ENCODE measurements at regions of chr11 and their contacts with region 1.

Region 1: GRCh38 chr11:6992457-6993417 is 27.4 kb downstream of the ZNF214 start:
- DNase-seq: no peak
- H3K4me3 Mint-ChIP-seq: no peak overlapping the region
- H3K27ac Mint-ChIP-seq: no peak overlapping the region
- H3K4me1 Mint-ChIP-seq: no peaks in the 10 kb centered on the region
- H3K27me3 Mint-ChIP-seq: no peaks in the 10 kb centered on the region

Region 2: DNA sequence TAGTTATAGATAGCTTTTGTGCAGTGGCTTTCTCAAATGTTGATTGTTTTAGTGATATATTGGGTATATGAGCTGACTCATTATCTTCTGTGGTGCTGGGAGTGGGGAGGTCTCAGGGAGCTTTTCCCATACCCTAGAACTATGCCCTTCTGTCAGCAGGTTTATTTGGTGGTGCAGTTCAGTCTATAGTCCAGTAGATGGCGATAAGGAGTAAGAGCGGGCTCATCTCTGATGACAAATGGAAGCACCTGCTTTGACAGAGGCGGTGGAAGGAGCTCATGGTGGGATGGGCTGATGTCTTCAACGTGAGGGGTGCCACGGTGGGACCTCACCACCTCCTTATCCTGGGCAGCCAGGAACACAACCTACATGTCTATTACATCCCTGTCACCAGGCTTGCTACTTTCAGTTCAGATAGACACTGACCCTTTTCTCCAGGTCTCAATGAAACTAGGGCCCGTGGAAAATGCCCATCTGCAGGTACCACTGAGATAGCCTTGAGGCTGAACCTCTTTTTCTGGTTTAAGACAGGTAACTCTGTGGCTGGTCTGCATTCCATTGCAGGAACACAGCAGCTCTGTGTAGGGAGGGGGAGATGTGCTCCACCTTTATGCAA is 180.2 kb before region 1 on chr11:
- intact Hi-C with region 1: loop called (anchors 10 kb)
- DNase-seq: peak; percentile 23
- H3K4me3 Mint-ChIP-seq: no peak overlapping the region
- H3K27ac Mint-ChIP-seq: no peak overlapping the region
- H3K4me1 Mint-ChIP-seq: peaks cover 1% of the 10 kb centered on the region
- H3K27me3 Mint-ChIP-seq: peaks cover 28% of the 10 kb centered on the region

Region 3: GRCh38 chr11:6968816-6969215 is 23.9 kb before region 1 on chr11:
- intact Hi-C with region 1: no loop called
- DNase-seq: no peak
- H3K4me3 Mint-ChIP-seq: no peak overlapping the region
- H3K27ac Mint-ChIP-seq: no peak overlapping the region
- H3K4me1 Mint-ChIP-seq: no peaks in the 10 kb centered on the region
- H3K27me3 Mint-ChIP-seq: no peaks in the 10 kb centered on the region

Measured in activated T-helper 2 cell treated with anti-CD3 and anti-CD28 coated beads, Interferon-gamma antibody, Interleukin-2, Interleukin-4, amounts not matched to agents 10 μg/mL and 5 μg/mL and 100 μg/mL, durations not matched to agents 14 hours and 24 hours and 36 hours (primary cell).